ENCODE measurements at regions of chr1 and their contacts with region 1.

Region 1: GRCh38 chr1:160550572-160551034 is 27.5 kb upstream of the SLAMF6 start:
- DNase-seq: peak; percentile 82
- H3K4me3 Mint-ChIP-seq: no peak overlapping the region
- H3K27ac Mint-ChIP-seq: peak overlapping the region; percentile 61
- H3K4me1 Mint-ChIP-seq: peaks cover 34% of the 10 kb centered on the region
- H3K27me3 Mint-ChIP-seq: no peaks in the 10 kb centered on the region

Region 2: GRCh38 chr1:160489513-160490261 is 60.9 kb before region 1 on chr1:
- CTCF ChIA-PET with region 1: no interaction called
- POLR2A ChIA-PET with region 1: no interaction called
- intact Hi-C with region 1: no loop called
- DNase-seq: no peak
- H3K4me3 Mint-ChIP-seq: no peak overlapping the region
- H3K27ac Mint-ChIP-seq: peak overlapping the region; percentile 35
- H3K4me1 Mint-ChIP-seq: peaks cover 14% of the 10 kb centered on the region
- H3K27me3 Mint-ChIP-seq: no peaks in the 10 kb centered on the region

Region 3: DNA sequence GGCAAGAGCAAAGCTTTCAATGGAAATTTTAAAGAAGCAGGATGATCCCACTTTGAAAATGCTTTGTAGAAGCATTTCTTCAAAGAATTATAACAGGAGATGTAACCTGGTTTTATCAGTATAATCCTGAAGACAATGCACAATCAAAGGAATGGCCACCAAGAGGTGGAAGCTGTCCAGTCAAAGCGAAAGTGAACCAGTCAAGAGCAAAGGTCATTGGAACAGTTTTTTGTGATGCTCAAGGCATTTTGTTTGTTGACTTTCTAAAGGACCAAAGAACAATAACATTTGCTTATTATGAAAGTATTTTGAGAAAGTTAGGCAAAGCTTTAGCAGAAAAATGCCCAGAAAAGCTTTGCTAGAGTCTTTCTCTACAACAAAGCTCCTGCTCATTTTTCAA is 34.2 kb after region 1 on chr1:
- CTCF ChIA-PET with region 1: interaction called, 13 read pairs
- POLR2A ChIA-PET with region 1: no interaction called
- intact Hi-C with region 1: no loop called
- DNase-seq: no peak
- H3K4me3 Mint-ChIP-seq: no peak overlapping the region
- H3K27ac Mint-ChIP-seq: peak overlapping the region; percentile 57
- H3K4me1 Mint-ChIP-seq: peaks cover 53% of the 10 kb centered on the region
- H3K27me3 Mint-ChIP-seq: no peaks in the 10 kb centered on the region

Region 4: DNA sequence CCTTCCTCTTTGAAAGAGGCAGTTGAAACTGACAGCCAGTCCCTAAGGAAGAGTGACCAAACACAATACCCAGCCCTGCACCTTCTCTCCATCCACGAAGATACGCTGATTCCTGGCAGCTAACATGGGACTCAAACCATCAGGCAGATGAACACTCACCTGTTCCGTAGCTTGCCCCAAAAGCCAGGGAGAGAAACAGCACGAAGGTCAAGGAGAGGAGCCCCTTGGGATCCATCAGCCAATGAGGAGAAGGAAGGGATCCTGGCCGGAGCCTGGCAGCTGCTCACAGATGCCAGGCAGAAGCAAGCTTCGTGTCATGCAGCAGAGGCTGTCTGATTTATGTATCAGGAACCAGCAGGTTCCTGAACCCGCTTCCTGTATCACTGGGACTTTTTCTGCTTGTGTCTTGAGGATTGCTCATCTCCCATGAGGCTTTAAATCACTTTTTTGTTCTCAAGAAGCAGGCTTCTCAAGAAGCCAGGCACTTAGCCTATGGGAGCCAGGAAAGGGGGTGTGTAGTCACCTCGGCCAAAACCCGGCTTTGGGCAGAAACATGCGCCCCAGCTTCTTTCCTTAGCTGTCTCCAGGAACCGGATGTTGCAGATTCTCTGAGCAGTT is 96.2 kb after region 1 on chr1 and contains the start of gene SLAMF1:
- CTCF ChIA-PET with region 1: no interaction called
- POLR2A ChIA-PET with region 1: no interaction called
- intact Hi-C with region 1: no loop called
- DNase-seq: peak; percentile 85
- H3K4me3 Mint-ChIP-seq: peak within 1 kb of the TSS; percentile 96
- H3K27ac Mint-ChIP-seq: peak within 1 kb of the TSS; percentile 98
- H3K4me1 Mint-ChIP-seq: peaks cover 47% of the 10 kb centered on the region
- H3K27me3 Mint-ChIP-seq: no peaks in the 10 kb centered on the region
- total RNA-seq, gene SLAMF1: 166 TPM

Region 5: DNA sequence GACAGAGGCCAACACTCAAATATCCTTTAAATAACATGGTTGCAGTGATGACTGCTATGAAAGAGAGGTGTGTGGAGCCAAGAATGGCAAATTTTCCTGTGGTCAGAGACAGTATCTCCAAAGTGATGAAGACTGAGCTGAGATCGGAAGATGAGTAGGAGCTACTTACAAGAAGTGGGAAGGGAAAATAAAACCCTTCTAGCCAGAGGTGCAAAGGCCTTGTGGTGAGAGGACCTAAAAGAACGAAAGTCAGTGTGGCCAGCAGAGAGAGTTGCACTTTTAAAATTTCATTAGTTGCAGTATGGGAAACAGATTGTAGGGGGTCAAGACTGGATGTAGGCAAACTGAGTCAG is 206.2 kb after region 1 on chr1:
- CTCF ChIA-PET with region 1: no interaction called
- POLR2A ChIA-PET with region 1: no interaction called
- intact Hi-C with region 1: no loop called
- DNase-seq: no peak
- H3K4me3 Mint-ChIP-seq: no peak overlapping the region
- H3K27ac Mint-ChIP-seq: no peak overlapping the region
- H3K4me1 Mint-ChIP-seq: peaks cover 27% of the 10 kb centered on the region
- H3K27me3 Mint-ChIP-seq: no peaks in the 10 kb centered on the region

Measured in activated CD4-positive, alpha-beta memory T cell treated with anti-CD3 and anti-CD28 coated beads for 36 hours (primary cell).